ENCODE measurements at regions of chr5 and their contacts with region 1.

Region 1: DNA sequence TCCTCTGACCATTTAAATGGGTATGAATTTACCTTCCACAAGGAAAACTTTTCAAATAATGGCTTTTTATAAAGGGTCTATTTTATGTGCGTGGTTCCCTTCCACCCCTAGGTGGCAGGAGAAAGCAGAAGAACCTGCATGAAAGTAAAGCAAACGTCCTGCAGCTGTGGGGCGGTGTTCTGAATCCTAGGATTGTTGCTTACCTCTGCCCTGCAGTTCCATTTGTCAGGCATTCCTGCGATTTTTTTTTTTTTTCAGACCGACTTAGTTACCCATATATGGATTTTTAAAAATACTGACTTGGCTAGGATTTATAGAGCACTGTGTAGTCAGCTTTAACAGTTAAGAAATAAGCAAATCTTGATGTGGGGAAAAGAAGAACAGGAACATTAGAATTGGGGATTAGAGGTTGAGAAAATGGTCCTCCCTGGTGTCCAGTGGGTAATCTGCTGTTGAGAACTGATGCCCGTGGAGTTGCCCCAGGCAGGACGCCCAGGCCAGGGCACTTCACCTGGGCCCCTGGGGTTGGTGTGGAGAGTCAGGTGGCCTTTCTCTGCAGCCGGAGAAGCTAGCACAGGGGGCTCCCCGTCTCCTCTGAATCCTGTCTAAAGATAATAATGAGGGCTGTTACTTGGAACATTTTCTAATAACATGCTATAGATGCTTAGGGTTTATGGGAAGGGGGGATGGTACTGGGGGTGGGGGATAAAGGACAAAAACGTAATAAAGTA is 30.4 kb upstream of the LTC4S start:
- DNase-seq: peak; percentile 23 to 77 (median 56)
- ATAC-seq: peak; percentile 90
- H3K4me3 ChIP-seq: no peak overlapping the region
- H3K27ac ChIP-seq: peak overlapping the region in 1 of 2 donors; percentile 55
- H3K4me1 ChIP-seq: peaks cover 25 to 99% of the 10 kb centered on the region in 2 donors
- H3K27me3 ChIP-seq: no peaks in the 10 kb centered on the region
- CTCF ChIP-seq: peak; percentile 70 to 84

Region 2: DNA sequence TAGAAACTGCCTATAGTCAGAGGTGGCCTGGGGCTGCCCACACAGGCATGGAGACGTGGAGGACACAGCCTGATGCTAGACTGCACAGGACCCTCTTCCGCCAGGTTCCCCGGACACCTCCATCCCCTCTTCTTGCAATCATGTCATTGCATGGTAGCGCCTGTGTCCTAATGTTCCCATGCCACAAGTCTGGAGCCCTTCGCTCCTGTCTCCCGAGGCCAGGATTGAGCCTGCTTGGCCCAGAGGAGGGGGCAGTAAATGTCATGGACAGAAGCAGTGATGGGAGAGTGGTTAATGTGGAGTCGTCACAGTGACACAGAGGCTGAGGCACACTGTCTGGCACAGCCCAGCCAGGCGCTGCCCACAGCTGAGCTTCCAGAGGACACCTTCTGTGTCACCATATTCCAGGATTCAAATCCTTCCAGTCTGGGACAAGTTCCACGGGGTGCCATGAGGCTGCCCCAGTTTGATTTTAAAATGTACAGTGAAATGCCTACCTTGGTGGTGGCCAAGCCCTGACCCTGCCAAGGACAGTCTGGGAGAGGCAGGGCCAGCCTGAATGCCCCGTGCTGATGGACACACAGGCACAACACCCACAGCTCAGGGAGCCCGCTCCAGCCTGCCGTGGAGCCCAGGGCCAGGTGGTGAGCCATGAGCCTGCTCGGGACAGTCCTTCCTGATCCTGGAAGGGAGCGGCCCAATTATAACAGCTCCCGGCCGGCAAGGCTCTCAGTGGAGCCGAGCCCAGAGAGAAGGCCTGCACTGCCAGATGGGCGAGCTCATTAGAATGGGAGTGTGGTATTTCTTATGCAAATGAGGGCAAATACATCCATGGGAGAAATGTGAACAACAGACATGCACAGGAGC is 312.2 kb before region 1 on chr5:
- intact Hi-C with region 1: no loop called
- DNase-seq: no peak
- ATAC-seq: no peak
- H3K4me3 ChIP-seq: no peak overlapping the region
- H3K27ac ChIP-seq: no peak overlapping the region
- H3K4me1 ChIP-seq: no peaks in the 10 kb centered on the region
- H3K27me3 ChIP-seq: no peaks in the 10 kb centered on the region
- CTCF ChIP-seq: no peak

Region 3: GRCh38 chr5:179795863-179796833 is 32.8 kb after region 1 on chr5:
- intact Hi-C with region 1: loop called in 1 of 2 experiments (anchors 5 kb)
- DNase-seq: peak in 3 of 4 donors; percentile 85 to 99 (median 88)
- ATAC-seq: peak; percentile 83
- H3K4me3 ChIP-seq: peak overlapping the region; percentile 65 to 66
- H3K27ac ChIP-seq: peak overlapping the region; percentile 83 to 89
- H3K4me1 ChIP-seq: peaks cover 37 to 58% of the 10 kb centered on the region in 2 donors
- H3K27me3 ChIP-seq: no peaks in the 10 kb centered on the region
- CTCF ChIP-seq: peak; percentile 75 to 87

Region 4: DNA sequence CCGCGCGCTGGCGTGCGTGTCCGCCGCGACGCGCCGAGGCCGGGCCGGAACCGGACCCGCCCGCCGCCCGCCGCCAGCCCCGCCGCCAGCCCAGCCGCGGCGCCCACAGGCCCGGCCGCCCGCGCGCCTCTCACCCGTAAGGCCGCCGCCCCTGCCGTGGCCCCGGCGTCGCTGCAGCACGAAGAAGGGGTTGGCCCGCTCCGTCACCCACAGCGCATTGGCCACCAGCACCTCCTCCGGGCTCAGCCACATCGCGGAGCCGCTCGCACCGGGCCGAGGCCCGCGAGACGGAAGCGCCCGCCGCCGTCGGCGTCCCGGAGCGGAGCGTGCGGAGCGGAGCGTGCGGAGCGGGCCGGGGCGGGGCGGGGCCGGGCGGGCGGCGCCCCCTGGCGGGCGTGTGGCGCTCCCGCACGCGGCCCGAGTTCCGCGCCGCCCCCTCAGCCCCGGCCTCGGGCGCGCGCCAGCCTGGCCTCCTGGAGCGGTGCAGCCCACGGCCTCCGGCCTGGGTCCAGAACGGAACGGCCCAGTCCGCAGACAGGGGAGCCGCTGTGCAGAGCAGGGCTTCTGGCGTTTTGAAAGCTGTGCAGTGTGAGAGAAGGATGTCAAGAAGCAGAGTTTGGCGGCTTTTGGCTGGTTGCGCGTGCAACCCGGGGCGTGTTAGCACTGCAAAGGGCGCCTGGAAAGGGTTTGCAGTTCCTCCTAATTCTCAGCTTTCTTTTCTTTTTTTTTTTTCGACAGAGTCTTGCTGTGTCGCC is 144.4 kb after region 1 on chr5 and contains the start of gene TBC1D9B:
- intact Hi-C with region 1: loop called in 1 of 2 experiments (anchors 10 kb)
- DNase-seq: peak; percentile 64 to 95 (median 76)
- ATAC-seq: peak; percentile 95
- H3K4me3 ChIP-seq: peak within 1 kb of the TSS; percentile 53 to 68
- H3K27ac ChIP-seq: peak within 1 kb of the TSS; percentile 77 to 86
- H3K4me1 ChIP-seq: peaks cover 0 to 32% of the 10 kb centered on the region in 2 donors
- H3K27me3 ChIP-seq: no peaks in the 10 kb centered on the region
- CTCF ChIP-seq: peak; percentile 19 to 60
- polyA plus RNA-seq, gene TBC1D9B: 80.6 to 114 (median 91.3) TPM

Measured in left lung (tissue), 14 donors.